Dendritic cell treated with granulocyte-macrophage colony-stimulating factor and Interleukin-4, amounts not matched to agents 40 ng/mL and 50 ng/mL, for 4 days (primary cell): ENCODE measurements at regions of chr9 and their contacts with region 1.

Region 1: DNA sequence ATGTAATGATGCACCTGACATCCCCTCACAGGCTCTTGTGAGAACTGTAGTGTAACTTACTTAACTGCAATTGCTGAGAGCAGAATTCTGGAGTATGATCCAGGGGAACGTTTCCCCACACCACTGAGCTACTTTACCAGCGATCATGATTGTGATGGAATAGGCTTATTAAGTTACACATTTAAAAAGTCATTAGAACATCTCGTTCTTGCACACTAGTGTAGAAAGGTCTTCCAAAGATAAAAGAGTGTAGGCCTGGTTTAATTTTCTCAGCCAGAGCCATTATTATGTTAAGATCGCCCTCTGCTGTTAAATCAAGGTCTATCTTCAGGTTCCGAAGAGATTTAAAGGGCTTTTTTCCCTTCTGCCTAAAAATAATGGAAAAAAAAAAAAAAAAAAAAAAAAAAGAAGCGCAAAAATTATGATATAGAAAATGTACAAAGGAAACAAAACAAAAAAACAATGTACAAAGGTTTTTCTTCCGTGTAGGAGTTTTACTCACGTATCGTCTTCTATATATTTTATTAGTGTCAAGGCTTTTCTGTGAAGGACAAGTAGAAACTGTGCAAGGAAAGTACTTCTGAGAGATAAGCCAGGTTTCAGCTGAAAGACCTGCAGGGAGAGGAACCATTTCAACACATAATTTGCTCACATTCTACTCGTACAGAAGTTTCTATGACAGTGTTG is 18.6 kb upstream of the MOB3B start:
- H3K4me3 Mint-ChIP-seq: no peak overlapping the region
- H3K27ac Mint-ChIP-seq: no peak overlapping the region
- H3K4me1 Mint-ChIP-seq: peaks cover 15% of the 10 kb centered on the region
- H3K27me3 Mint-ChIP-seq: no peaks in the 10 kb centered on the region

Region 2: DNA sequence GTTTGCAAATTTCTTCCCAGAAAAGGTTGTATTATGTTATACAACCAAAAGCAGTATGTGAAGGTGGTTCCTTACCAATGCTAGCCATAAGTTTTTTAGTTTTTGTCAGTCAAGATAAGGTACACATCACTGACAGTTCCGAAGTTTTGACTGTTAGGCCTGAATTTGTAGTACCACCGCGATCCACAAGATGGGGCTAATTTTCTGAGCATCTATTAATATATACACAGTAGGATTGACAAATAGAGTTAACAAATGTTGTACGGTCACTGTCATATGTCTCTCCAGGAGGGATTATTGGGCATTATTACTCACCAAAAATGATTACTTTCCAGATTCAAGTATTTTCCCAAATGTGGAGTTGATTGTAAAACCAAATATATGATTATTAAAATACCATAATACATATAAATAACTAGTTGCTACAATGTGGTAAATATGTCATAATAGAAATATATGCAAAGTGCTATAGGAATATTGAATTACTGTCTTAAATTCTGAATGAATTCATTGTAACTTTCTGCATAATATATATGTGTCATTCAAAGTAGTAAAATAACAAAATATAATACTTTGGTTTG is 514.3 kb before region 1 on chr9:
- intact Hi-C with region 1: loop called (anchors 2 kb)
- H3K4me3 Mint-ChIP-seq: no peak overlapping the region
- H3K27ac Mint-ChIP-seq: no peak overlapping the region
- H3K4me1 Mint-ChIP-seq: no peaks in the 10 kb centered on the region
- H3K27me3 Mint-ChIP-seq: no peaks in the 10 kb centered on the region

Region 3: DNA sequence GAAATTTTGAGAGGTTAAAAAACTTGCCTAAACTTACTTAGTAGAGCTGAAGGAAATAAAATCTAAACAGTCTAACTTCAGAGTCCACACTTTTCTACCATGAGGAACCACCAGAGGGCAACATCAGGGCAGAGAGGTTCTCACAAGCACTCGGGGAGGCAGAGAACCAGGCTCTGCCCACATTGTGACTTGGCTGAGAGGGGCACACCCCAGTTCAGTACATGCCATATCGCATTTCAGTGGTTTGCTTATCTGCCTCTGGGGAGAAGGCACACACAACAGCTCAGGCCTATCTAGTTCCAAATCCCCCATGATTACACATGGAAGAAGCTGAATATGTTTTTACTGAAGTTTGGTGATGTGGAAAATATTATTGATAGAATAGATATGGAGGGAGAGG is 300.4 kb before region 1 on chr9:
- intact Hi-C with region 1: loop called (anchors 5 kb)
- H3K4me3 Mint-ChIP-seq: no peak overlapping the region
- H3K27ac Mint-ChIP-seq: no peak overlapping the region
- H3K4me1 Mint-ChIP-seq: peaks cover 13% of the 10 kb centered on the region
- H3K27me3 Mint-ChIP-seq: no peaks in the 10 kb centered on the region

Region 4: DNA sequence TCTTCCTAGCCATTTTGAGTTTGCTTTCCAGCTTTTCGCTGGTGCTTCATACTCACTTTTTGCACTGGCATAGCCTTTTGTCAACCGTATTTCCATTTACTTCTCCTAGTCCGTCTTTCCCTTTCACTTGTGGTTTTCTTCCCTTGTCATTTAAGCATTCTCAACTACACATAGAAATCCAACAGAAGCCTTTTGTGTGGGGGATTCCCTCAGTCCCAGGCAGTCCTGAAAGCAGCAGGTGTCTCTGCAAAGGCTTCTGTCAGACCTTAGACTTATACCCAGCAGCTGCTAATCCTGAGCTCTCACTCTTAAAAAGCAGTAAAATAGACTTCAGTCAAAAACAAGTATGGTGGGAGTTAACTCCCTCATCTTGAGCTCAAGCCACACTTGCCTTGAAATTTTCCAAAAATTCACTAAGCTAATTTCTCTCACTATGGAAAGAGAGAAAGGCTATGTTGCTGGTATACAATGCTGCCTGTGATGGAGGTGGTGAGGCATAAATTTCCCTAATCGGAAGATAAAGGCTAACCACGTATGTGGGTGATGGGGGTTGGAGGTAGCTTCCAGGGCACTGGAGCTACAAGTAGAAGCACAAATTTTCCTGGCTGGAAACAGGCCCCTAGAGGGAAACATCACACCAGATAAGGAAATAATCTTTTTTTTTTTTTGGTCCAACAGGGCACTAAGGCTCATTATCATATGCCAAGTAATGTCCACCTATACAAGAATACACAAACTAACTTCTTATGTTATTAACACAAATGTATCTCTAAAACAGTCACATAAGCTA is 58.9 kb before region 1 on chr9:
- intact Hi-C with region 1: no loop called
- H3K4me3 Mint-ChIP-seq: no peak overlapping the region
- H3K27ac Mint-ChIP-seq: no peak overlapping the region
- H3K4me1 Mint-ChIP-seq: peaks cover 66% of the 10 kb centered on the region
- H3K27me3 Mint-ChIP-seq: no peaks in the 10 kb centered on the region

Region 5: DNA sequence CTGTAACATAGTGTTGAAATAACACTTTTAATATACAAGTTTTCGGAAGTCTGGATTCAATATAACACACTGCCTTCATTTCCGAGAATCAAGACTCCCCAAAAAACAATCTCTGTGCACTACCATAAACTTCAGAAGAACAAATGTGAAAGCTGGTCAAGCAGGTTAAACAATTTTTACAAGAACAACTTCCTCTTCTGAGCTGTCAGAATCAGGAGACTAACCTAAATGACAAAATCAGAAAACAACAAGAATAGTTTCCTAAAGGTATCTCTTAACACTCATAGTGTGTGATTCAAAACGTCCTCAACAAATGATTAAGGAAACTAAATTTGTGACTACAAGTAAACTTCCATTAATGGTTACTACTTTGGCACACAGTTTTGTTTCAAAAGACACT is 13.5 kb after region 1 on chr9:
- intact Hi-C with region 1: no loop called
- H3K4me3 Mint-ChIP-seq: no peak overlapping the region
- H3K27ac Mint-ChIP-seq: peak overlapping the region; percentile 67
- H3K4me1 Mint-ChIP-seq: peaks cover 11% of the 10 kb centered on the region
- H3K27me3 Mint-ChIP-seq: no peaks in the 10 kb centered on the region

Region 6: DNA sequence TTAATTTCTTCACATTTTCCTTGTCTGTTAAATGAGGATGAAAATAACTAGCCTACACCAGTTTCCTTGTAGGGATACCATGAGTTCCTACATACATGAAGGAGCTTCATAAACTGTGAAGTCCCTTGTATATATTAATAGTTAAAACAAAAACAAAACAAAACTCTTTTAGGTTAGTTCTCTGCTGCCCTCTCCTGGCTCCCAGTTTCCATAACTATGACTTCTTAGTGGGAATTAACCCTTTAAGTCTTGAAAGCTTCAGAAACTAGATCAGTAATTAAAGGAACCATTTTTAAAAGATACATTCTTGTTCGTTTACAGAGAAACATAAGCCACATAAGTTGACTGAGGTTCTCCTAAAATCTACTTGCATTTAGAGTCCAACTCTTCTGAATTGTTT is 525.1 kb after region 1 on chr9:
- intact Hi-C with region 1: loop called (anchors 10 kb)
- H3K4me3 Mint-ChIP-seq: no peak overlapping the region
- H3K27ac Mint-ChIP-seq: no peak overlapping the region
- H3K4me1 Mint-ChIP-seq: no peaks in the 10 kb centered on the region
- H3K27me3 Mint-ChIP-seq: no peaks in the 10 kb centered on the region